Right lobe of liver (tissue), 6 donors: ENCODE measurements at regions of chr10 and their contacts with region 1.

Region 1: DNA sequence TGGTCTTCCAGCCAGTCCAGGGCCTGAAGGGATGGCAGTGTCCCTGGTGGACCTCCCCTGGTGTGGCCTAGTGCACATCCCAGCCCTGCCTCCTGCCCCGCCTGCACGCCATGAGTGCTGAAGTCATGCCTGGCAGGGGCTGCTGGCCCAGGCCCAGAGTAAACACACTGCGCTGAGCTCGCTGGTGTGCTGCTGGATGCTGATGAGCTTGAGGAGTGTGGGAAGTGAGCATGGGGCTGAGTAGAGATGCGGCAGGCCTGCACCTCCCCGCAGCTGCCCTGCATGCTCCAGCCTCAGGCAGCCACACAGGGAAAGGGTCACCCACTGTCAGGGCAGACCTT is 43.2 kb downstream of the HTRA1 start:
- DNase-seq: peak; percentile 88 to 90 (median 89)
- ATAC-seq: peak; percentile 96 to 99 (median 98)
- H3K4me3 ChIP-seq: no peak overlapping the region
- H3K27ac ChIP-seq: no peak overlapping the region
- H3K4me1 ChIP-seq: no peaks in the 10 kb centered on the region
- H3K27me3 ChIP-seq: no peaks in the 10 kb centered on the region
- CTCF ChIP-seq: no peak
- POLR2A ChIP-seq: no peak

Region 2: DNA sequence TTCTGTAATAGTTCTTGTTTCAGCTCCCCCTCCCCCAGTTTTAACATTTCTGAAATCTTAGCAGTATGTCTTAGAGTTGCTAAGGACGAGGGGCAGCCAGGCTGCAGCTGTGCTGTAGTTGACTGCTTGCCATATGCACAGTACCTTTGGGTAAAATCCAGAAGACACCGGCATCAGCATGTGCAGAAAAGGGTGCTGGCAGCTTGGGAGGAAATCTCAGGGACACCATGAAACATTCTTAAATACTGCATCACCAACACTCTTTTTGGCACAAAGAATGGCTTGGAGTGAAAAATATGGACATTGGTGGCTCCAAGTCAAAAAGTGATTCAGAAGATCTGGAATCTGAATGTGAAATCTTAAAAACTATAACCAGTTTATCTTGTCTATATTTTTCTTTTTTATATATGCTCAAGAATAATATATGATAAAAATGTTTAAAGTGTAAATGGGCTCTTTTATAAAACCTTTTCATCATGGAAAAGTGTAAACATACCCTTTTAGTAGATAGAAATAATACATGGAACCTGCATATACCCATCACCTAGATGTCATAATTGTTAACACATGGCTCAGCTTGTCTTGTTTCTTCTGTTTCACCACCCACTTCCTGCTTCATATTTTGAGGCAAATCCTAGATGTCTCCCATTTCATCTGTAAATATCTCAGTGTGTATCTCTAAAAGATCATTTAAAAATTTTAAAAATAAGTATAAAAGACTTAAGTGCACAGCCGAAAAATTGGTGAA is 84.5 kb before region 1 on chr10:
- intact Hi-C with region 1: no loop called
- DNase-seq: no peak
- ATAC-seq: no peak
- H3K4me3 ChIP-seq: no peak overlapping the region
- H3K27ac ChIP-seq: no peak overlapping the region
- H3K4me1 ChIP-seq: no peaks in the 10 kb centered on the region
- H3K27me3 ChIP-seq: no peaks in the 10 kb centered on the region
- CTCF ChIP-seq: no peak
- POLR2A ChIP-seq: no peak

Region 3: DNA sequence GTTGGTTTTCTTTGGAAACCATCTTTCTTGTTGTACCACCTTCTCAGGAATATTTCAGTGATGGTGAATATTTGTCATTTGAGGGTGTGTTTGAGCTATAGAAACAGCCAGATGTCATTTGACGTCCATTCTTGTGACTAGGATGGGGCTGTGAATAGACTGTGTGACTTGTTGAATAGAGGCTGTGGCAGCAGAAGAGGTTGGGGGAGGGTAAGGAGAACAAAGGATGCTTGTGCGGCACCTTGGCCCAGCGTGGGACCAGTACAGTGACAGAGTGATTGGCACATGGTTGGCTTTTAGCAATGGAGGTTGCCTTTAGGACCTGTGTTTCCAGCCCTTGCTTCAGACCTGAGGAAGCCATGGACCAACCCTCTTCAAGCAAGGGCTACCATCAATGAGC is 67.3 kb after region 1 on chr10:
- intact Hi-C with region 1: loop called in 1 of 2 experiments (anchors 10 kb)
- DNase-seq: no peak
- ATAC-seq: no peak
- H3K4me3 ChIP-seq: no peak overlapping the region
- H3K27ac ChIP-seq: no peak overlapping the region
- H3K4me1 ChIP-seq: no peaks in the 10 kb centered on the region
- H3K27me3 ChIP-seq: no peaks in the 10 kb centered on the region
- CTCF ChIP-seq: no peak
- POLR2A ChIP-seq: no peak